ENCODE measurements at regions of chr16 and their contacts with region 1.

Region 1: GRCh38 chr16:4475880-4476788 is at the start of gene HMOX2:
- DNase-seq: peak; percentile 99
- H3K4me3 Mint-ChIP-seq: peak within 1 kb of the TSS; percentile 92
- H3K27ac Mint-ChIP-seq: peak within 1 kb of the TSS; percentile 82
- H3K4me1 Mint-ChIP-seq: peaks cover 29% of the 10 kb centered on the region
- H3K27me3 Mint-ChIP-seq: no peaks in the 10 kb centered on the region
- total RNA-seq, gene HMOX2: 64.3 and 70.0 TPM in 2 replicates

Region 2: GRCh38 chr16:4350787-4351659 is 125.1 kb before region 1 on chr16 and contains the start of gene PAM16:
- intact Hi-C with region 1: loop called (anchors 10 kb)
- DNase-seq: peak; percentile 100
- H3K4me3 Mint-ChIP-seq: peak within 1 kb of the TSS; percentile 96
- H3K27ac Mint-ChIP-seq: peak within 1 kb of the TSS; percentile 94
- H3K4me1 Mint-ChIP-seq: peaks cover 12% of the 10 kb centered on the region
- H3K27me3 Mint-ChIP-seq: no peaks in the 10 kb centered on the region
- total RNA-seq, gene PAM16: 93.5 and 104 TPM in 2 replicates

Region 3: DNA sequence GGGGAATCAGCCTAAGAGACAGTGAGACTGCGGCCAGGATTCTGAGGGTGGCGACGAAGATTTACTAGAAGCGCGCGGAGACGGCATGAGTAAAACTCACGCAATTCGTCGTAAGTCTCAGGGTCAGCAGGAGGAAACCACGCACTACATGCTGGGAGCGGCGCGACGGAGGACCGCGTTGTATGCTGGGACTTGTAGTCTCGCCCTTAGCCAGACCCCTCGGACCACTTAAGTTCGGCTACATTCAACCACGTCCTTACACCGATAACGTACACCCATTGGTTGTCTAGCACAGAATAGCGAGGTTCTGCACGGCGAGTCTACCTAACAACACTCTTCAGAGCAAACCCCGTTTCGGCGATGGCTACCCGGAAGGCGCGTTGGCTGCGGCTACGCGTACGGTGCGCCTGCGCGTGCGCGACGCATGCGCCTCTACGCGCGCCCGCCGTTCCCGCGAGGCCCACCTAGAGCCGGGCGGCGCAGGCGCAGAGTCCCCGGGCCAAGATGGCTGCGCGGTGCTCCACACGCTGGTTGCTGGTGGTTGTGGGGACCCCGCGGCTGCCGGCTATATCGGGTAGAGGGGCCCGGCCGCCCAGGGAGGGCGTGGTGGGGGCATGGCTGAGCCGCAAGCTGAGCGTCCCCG is 50.6 kb before region 1 on chr16 and contains the start of gene DNAJA3:
- intact Hi-C with region 1: loop called (anchors 1 kb)
- DNase-seq: peak; percentile 98
- H3K4me3 Mint-ChIP-seq: peak within 1 kb of the TSS; percentile 100
- H3K27ac Mint-ChIP-seq: peak within 1 kb of the TSS; percentile 100
- H3K4me1 Mint-ChIP-seq: peaks cover 29% of the 10 kb centered on the region
- H3K27me3 Mint-ChIP-seq: peaks cover 3% of the 10 kb centered on the region
- total RNA-seq, gene DNAJA3: 106 and 108 TPM in 2 replicates

Region 4: DNA sequence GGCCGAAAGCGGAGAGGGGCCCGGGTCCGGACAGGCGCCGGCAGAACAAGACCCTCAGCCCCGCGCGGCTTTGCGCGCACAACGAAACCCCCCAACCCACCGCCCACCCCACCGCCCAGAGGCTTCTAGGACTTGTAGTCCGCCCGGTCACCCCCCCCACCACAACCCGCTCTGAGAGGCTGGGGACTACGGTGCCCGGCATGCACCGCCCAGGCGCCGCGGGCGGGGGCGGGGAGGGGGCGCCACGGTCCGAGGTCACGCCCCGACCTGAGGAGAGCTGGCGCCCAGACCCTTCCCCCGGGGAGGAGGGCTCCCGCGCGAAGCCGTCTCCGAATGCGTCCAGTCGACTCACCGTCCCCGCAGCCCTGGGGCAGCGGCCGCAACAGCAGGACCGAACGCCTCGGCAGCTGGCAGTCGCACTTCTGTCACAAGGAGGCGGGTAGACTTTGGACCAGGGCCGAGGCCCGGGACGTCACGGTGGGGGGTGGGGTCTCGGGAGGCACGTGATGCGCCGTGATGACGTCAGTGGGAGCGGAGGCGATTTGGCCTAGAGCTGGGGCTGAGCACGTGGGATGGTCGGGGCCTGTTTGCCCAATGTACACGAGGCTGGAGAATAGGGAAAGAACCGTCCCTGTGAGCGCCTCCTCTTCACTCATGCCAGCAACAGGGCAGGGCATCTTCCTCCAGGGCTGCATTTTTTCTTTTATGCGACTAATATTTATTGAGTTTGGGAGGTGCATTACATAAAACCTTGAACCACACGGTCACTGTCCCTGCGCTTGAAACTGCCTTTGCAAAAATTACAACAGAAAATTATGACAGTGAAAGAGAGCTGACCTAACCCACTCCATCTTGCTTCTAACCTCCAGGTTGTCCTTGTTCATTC is 62.5 kb after region 1 on chr16 and contains the start of gene CDIP1:
- intact Hi-C with region 1: loop called (anchors 1 kb)
- DNase-seq: peak; percentile 97
- H3K4me3 Mint-ChIP-seq: peak within 1 kb of the TSS; percentile 85
- H3K27ac Mint-ChIP-seq: peak within 1 kb of the TSS; percentile 89
- H3K4me1 Mint-ChIP-seq: peaks cover 31% of the 10 kb centered on the region
- H3K27me3 Mint-ChIP-seq: peaks cover 4% of the 10 kb centered on the region
- total RNA-seq, gene CDIP1: 49.4 and 55.2 TPM in 2 replicates

Region 5: DNA sequence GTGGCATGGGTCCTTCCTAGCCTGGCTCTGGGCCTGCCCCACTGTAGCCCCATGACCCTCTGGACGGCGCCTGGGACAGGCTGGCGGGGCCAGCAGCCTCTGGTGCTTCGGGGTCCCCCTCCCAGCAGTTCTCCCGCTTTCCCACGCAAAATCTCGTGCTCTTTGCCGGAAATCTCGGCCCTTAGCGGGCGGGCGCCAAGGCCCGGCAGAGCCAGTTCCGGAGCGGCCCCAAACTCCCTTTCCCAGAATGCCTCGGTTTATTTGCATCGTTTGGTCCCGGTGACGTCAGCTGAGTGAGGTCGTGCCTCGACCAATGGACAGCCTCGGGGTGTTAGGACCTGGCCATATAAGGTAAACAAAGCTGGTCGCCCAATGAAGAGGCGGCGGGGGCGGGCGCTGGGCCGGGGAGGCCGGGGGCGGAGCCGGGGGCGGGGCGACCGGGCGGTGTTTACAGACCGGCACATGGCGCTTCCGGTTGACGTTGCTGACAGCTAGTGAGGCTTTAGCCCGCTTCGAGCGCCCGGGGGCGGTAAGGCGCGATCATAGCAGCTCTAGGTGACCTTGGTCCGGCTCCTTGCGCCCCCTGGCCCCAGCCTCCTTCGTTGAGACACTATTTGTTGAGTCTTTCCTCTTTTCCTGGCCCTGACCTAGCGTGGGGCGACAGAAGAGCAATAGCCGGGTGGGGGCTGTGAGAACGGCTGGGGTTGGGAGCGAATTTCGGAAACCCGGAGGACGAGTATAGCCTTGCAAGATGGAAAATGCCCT is 140.1 kb after region 1 on chr16:
- intact Hi-C with region 1: loop called (anchors 1 kb)
- DNase-seq: peak; percentile 100
- H3K4me3 Mint-ChIP-seq: peak overlapping the region; percentile 84
- H3K27ac Mint-ChIP-seq: peak overlapping the region; percentile 96
- H3K4me1 Mint-ChIP-seq: peaks cover 12% of the 10 kb centered on the region
- H3K27me3 Mint-ChIP-seq: no peaks in the 10 kb centered on the region